Dorsolateral prefrontal cortex (tissue), 120 donors: ENCODE measurements at regions of chr3 and their contacts with region 1.

Region 1: DNA sequence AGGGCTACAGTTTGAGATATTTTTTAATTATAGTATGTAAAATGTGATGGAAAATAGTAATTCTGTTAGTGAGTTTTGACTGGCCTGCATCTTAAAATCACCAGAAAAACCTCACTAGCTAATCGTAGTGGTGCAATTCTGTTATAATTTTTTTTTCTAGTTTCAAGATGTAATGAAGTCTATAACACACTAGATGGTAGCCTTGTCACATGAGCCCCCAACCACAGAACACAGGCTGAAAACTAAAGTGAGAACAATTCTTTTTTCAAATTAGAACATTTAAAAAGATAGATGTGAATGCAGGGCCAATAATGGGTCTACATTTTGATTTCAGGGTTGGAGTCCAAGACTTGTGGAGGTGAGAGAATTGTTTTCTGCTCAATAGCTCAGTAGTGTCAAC is 83.3 kb upstream of the KCNH8 start:
- DNase-seq: peak in 1 of 10 donors; percentile 31
- H3K4me3 ChIP-seq: no peak overlapping the region
- H3K27ac ChIP-seq: no peak overlapping the region
- H3K27me3 ChIP-seq: peaks cover 0 to 6% (median 0%) of the 10 kb centered on the region in 45 donors
- CTCF ChIP-seq: peak in 55 of 56 donors; percentile 39 to 87 (median 67)

Region 2: DNA sequence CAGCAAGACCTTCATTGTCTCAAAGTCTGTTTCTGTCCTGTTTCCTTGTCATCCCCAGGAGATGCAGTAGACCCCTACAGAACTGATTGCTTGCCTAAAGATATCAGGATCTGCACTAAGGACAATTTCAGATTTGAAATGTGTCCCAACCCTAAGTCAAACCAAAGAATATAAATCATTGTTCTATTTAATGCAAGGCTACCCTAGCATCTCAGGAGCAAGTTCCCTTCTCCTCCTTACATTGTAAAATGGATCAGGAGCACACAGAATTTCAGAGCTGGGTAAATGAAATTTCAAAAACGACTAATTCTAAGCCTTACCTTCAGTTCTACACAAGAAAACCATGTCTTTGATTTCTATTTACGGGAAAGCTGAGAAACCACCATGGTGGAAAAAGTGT is 277.6 kb before region 1 on chr3:
- intact Hi-C with region 1: no loop called
- DNase-seq: no peak
- H3K4me3 ChIP-seq: no peak overlapping the region
- H3K27ac ChIP-seq: no peak overlapping the region
- H3K27me3 ChIP-seq: no peaks in the 10 kb centered on the region
- CTCF ChIP-seq: no peak

Region 3: DNA sequence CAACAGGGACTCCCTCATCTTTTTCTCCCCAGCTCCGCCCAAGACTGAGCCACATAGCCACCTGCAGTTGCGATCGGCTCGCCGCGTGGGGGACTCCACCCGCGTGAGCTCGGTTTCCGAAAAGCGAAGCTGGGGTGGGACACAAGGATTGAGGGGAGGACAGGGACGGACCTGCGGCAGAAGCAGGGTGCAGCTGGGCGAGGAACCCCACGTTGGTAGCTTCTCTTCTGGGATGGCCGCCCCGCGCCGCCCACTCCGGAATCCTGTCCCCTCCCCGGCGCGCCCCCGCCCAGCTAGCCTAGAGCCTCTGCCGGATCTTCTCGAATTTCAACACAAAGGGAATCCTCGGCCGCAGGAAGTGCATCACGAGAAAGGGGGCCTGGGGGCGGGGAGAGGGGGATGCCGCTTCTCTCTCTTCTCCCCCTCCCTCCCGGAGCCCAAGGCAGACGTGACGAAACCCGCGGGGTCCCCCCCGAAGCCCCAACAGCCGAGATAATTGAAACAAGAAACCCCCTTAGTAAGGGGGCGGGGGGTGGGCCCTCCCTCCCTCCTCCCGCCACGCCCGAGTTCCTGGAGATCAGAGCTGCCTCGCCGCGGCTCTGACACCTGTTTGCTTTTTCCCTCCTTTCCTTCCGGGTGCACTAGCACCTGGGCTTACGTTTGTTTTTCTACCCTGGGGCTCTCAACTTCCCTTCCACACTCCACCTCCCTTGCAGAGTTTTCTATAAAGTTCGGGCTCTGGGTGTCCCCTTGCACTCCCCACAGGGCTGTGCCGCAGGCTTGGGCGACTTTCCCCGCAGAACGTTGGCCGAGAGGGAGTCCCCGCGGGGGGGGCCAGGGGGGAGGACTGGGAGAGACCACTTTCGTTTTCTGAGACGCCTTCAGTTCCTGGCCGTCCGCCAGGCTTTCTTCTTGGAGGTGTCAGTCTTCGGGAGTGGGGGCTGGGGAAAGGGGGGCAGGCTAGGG is 81.9 kb after region 1 on chr3:
- intact Hi-C with region 1: loop called in 1 of 2 experiments (anchors 5 kb)
- DNase-seq: peak; percentile 23 to 85 (median 76)
- H3K4me3 ChIP-seq: peak overlapping the region; percentile 53 to 91 (median 72)
- H3K27ac ChIP-seq: peak overlapping the region; percentile 12 to 98 (median 93)
- H3K27me3 ChIP-seq: peaks cover 0 to 41% (median 11%) of the 10 kb centered on the region in 45 donors
- CTCF ChIP-seq: peak in 55 of 56 donors; percentile 15 to 71 (median 52)

Region 4: GRCh38 chr3:19213601-19214220 is 148.7 kb after region 1 on chr3:
- intact Hi-C with region 1: loop called (anchors 5 kb)
- DNase-seq: no peak
- H3K4me3 ChIP-seq: no peak overlapping the region
- H3K27ac ChIP-seq: peak overlapping the region in 21 of 59 donors; percentile 1 to 78 (median 33)
- H3K27me3 ChIP-seq: no peaks in the 10 kb centered on the region
- CTCF ChIP-seq: peak in 53 of 56 donors; percentile 25 to 79 (median 50)

Region 5: DNA sequence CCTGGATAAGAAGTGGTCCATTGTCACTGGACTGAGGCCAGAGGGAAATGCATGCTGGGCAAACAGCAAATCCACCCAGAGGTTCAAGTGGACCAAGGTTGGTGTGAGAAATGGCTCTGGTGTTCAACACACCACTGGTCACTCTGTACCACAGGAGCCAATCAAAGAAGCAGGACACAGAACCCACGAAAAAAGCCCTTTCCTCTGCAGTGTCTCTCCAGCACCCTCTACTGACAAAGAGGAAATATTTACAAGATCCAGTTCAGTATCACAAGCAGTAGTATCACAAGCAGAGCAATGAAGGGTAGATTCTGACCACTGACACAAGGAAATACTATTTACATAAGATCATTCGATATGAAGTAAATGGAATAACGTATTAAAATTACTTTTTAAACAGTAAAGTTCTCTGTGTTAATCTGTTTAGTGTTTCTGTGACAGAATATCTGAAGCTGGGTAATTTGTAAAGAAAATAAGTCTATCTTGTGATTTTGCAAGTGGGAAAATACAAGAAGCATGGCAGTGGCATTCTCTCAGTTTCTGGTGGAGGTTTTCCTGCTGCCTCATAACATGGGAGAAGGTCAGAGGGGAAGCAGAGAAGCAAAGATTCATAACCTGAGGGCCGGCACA is 478.3 kb after region 1 on chr3:
- intact Hi-C with region 1: loop called (anchors 5 kb)
- DNase-seq: no peak
- H3K4me3 ChIP-seq: no peak overlapping the region
- H3K27ac ChIP-seq: no peak overlapping the region
- H3K27me3 ChIP-seq: no peaks in the 10 kb centered on the region
- CTCF ChIP-seq: peak in 54 of 56 donors; percentile 31 to 81 (median 62)

Region 6: DNA sequence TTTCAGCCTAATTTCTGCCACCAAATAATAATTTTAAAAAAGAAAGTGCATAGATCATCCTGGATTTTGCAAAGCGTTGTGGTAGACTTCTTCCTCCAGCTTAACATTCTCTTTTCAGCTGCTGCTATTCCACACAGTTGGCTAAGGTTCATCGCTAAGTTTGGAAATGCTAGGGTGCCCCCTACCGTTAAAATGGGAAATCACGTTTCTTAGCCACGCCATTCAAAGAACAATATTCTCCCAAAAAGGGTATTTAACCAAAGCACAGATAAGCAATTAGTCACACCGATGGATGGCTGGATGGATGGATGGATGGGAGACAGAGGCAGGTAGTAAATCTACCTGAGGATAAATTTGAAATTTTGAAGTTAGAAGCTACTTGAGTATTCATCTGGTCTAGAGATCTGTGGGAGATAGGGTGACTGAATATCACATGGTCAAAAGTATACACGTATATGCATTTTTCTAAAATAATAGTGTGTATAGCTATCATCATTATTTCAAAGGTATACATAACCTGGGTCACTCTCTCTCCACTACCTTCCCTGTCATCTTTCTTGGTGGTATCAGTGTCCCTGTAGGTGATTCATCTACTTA is 801.8 kb after region 1 on chr3:
- intact Hi-C with region 1: loop called (anchors 5 kb)
- DNase-seq: peak in 4 of 10 donors; percentile 36 to 67 (median 56)
- H3K4me3 ChIP-seq: peak overlapping the region in 3 of 59 donors; percentile 11 to 31 (median 17)
- H3K27ac ChIP-seq: no peak overlapping the region
- H3K27me3 ChIP-seq: no peaks in the 10 kb centered on the region
- CTCF ChIP-seq: peak; percentile 64 to 92 (median 84)